ENCODE measurements at regions of chr16 and their contacts with region 1.

Region 1: GRCh38 chr16:54286090-54286993 is at the start of gene IRX3:
- DNase-seq: peak; percentile 73
- H3K4me3 Mint-ChIP-seq: peak within 1 kb of the TSS; percentile 89
- H3K27ac Mint-ChIP-seq: peak within 1 kb of the TSS; percentile 79
- H3K4me1 Mint-ChIP-seq: peaks cover 25% of the 10 kb centered on the region
- H3K27me3 Mint-ChIP-seq: peaks cover 72% of the 10 kb centered on the region
- total RNA-seq, gene IRX3: 0.43 and 1.4 TPM in 2 replicates

Region 2: GRCh38 chr16:53773150-53773846 is 513.0 kb before region 1 on chr16:
- intact Hi-C with region 1: loop called (anchors 5 kb)
- DNase-seq: peak; percentile 75
- H3K4me3 Mint-ChIP-seq: no peak overlapping the region
- H3K27ac Mint-ChIP-seq: no peak overlapping the region
- H3K4me1 Mint-ChIP-seq: peaks cover 21% of the 10 kb centered on the region
- H3K27me3 Mint-ChIP-seq: no peaks in the 10 kb centered on the region

Region 3: GRCh38 chr16:53892155-53892554 is 394.2 kb before region 1 on chr16:
- intact Hi-C with region 1: loop called (anchors 2 kb)
- DNase-seq: peak; percentile 89
- H3K4me3 Mint-ChIP-seq: no peak overlapping the region
- H3K27ac Mint-ChIP-seq: peak overlapping the region; percentile 58
- H3K4me1 Mint-ChIP-seq: peaks cover 28% of the 10 kb centered on the region
- H3K27me3 Mint-ChIP-seq: no peaks in the 10 kb centered on the region

Region 4: DNA sequence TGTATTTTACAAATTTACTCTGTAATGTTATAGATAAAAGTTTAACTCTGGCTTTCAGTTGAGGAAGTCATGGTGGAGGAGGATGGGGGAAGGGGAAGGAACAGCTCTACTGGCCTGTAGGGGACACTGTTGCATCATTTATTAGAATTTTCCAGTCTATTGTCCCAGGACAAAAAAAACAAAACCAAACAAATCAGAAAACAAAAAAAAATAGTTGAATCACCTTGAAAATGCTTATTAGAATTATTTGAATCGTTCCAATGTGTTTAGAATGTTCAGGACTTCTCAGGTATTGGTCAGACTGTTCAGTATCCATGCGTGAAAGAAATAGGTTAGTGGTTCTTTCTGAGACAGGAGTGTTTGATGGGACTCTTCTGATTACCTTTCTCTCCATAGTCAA is 340.3 kb before region 1 on chr16:
- intact Hi-C with region 1: loop called (anchors 10 kb)
- DNase-seq: peak; percentile 67
- H3K4me3 Mint-ChIP-seq: no peak overlapping the region
- H3K27ac Mint-ChIP-seq: no peak overlapping the region
- H3K4me1 Mint-ChIP-seq: peaks cover 20% of the 10 kb centered on the region
- H3K27me3 Mint-ChIP-seq: no peaks in the 10 kb centered on the region

Region 5: DNA sequence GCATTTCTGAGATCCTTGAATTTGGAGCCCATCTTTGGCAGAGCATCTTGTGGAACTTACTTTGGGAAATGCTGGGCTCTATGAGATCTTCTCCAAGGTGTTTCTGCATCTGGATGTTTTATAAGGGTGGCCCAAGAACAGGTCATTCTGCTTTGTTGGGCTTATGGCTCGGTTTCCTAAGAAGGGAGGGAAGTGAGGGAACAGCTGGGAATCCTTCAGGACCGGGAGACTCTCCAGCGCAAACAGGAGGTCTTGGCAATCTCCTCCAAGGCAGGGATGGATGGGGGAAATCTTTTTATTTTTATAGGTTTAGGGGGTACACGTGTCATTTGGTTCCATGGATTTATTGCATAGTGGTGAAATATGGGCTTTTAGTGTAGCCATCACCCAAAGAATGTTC is 54.4 kb before region 1 on chr16:
- intact Hi-C with region 1: no loop called
- DNase-seq: no peak
- H3K4me3 Mint-ChIP-seq: no peak overlapping the region
- H3K27ac Mint-ChIP-seq: no peak overlapping the region
- H3K4me1 Mint-ChIP-seq: no peaks in the 10 kb centered on the region
- H3K27me3 Mint-ChIP-seq: peaks cover 7% of the 10 kb centered on the region

Region 6: DNA sequence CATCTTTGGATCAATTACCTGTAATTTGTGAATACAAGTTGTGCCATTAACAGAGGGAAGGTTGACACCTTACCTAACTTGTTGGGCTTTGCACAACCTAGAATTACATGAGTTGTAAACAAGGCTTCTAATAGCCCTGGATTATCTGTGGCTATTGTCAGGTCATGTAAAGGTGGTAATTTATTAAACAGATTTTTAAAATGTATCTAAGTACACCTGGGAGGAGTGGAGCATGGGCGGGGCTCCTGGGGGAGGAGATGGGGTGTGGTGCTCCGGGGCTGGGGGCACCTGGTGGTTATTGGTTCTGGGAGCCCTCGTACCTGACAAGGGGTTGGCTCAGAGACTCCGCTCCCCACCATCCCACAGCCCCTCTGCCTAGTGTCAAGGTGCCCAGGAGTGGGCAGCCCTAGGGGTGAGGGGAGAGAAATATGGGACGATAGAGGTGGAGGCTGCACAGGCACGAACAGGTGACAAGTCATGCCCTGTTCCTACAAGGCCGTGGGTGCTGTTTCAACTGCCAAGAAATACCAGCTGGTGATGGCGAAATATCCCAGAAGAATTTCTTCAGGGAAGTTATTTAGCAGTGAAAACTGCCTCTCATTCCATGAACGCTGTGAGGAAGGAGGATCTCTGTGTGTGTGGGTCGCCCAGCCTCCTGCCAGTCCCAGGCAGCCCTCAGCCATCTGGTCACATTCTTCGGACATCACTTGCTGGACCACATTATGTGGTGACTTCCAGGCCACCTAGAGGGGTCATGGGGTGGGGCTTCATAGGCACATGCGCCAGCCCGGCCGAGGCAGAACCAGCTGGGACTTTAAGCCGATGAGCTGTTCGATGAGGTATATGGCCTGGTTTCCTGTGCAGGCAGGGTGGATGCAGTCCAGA is 55.8 kb after region 1 on chr16:
- intact Hi-C with region 1: no loop called
- DNase-seq: no peak
- H3K4me3 Mint-ChIP-seq: no peak overlapping the region
- H3K27ac Mint-ChIP-seq: no peak overlapping the region
- H3K4me1 Mint-ChIP-seq: no peaks in the 10 kb centered on the region
- H3K27me3 Mint-ChIP-seq: no peaks in the 10 kb centered on the region

Region 7: GRCh38 chr16:54936979-54937670 is 650.8 kb after region 1 on chr16:
- intact Hi-C with region 1: loop called (anchors 2 kb)
- DNase-seq: peak; percentile 66
- H3K4me3 Mint-ChIP-seq: peak overlapping the region; percentile 26
- H3K27ac Mint-ChIP-seq: peak overlapping the region; percentile 51
- H3K4me1 Mint-ChIP-seq: peaks cover 16% of the 10 kb centered on the region
- H3K27me3 Mint-ChIP-seq: peaks cover 83% of the 10 kb centered on the region

Region 8: GRCh38 chr16:55323637-55324490 is 1037.5 kb after region 1 on chr16 and contains the start of gene IRX6:
- intact Hi-C with region 1: loop called (anchors 10 kb)
- DNase-seq: no peak
- H3K4me3 Mint-ChIP-seq: no peak within 1 kb of the TSS
- H3K27ac Mint-ChIP-seq: no peak within 1 kb of the TSS
- H3K4me1 Mint-ChIP-seq: no peaks in the 10 kb centered on the region
- H3K27me3 Mint-ChIP-seq: peaks cover 42% of the 10 kb centered on the region
- total RNA-seq, gene IRX6: not detected in 2 replicates

Region 9: DNA sequence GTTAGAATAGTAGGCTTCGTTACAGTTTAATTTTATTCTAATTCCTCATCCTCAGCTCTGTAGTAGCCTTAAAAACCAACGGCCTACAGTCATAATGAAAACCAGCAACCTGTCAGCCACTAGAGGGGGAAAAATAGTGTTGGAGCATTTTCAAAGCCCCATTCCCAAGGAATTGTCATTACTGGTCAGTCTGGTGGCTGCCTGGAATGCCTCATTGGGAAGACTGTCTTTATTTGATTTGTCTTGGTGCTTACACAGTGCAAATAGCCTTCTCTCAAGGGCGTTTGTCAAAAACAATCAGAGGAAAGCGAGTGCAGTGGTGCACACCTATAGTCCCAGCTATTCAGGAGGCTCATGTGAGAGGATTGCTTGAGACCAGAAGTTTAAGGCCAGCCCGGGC is 1227.3 kb after region 1 on chr16:
- intact Hi-C with region 1: loop called (anchors 10 kb)
- DNase-seq: no peak
- H3K4me3 Mint-ChIP-seq: no peak overlapping the region
- H3K27ac Mint-ChIP-seq: no peak overlapping the region
- H3K4me1 Mint-ChIP-seq: peaks cover 10% of the 10 kb centered on the region
- H3K27me3 Mint-ChIP-seq: peaks cover 25% of the 10 kb centered on the region

Measured in activated CD4-positive, alpha-beta T cell treated with anti-CD3 and anti-CD28 coated beads, Interleukin-2, amount 10 ng/mL, durations not matched to agents 24 days and 14 days (primary cell).